WTC11 (cell line): ENCODE measurements at regions of chr1 and their contacts with region 1.

Region 1: DNA sequence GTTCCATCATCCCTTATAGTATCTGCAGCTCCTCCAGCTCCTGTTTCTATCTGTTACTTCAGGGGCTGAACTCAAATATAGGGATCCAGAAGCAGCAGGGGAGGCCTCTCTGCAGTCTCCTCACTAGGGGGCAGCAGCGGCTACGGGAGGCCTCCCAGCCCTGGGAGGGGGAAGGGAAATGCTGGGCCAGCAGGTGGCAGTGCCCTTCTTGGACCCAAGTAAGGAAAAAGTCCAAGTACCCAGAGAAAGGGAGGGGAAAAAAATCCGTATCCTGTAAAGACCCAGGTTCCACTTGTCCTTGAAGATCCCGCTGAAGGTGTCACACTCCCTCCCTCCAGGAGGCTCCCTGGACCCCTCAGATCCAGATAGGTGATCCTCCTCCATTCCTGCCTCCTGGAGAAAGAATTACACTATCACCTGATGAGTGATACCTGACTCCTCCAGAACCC is 14.1 kb upstream of the NUAK2 start:
- DNase-seq: peak; percentile 87
- ATAC-seq: peak; percentile 87
- H3K4me3 Mint-ChIP-seq: no peak overlapping the region
- H3K27ac Mint-ChIP-seq: no peak overlapping the region
- H3K4me1 Mint-ChIP-seq: peaks cover 21% of the 10 kb centered on the region
- H3K27me3 Mint-ChIP-seq: peaks cover 9% of the 10 kb centered on the region
- CTCF ChIP-seq: peak; percentile 60; the same call in 1 of the 2 replicates

Region 2: DNA sequence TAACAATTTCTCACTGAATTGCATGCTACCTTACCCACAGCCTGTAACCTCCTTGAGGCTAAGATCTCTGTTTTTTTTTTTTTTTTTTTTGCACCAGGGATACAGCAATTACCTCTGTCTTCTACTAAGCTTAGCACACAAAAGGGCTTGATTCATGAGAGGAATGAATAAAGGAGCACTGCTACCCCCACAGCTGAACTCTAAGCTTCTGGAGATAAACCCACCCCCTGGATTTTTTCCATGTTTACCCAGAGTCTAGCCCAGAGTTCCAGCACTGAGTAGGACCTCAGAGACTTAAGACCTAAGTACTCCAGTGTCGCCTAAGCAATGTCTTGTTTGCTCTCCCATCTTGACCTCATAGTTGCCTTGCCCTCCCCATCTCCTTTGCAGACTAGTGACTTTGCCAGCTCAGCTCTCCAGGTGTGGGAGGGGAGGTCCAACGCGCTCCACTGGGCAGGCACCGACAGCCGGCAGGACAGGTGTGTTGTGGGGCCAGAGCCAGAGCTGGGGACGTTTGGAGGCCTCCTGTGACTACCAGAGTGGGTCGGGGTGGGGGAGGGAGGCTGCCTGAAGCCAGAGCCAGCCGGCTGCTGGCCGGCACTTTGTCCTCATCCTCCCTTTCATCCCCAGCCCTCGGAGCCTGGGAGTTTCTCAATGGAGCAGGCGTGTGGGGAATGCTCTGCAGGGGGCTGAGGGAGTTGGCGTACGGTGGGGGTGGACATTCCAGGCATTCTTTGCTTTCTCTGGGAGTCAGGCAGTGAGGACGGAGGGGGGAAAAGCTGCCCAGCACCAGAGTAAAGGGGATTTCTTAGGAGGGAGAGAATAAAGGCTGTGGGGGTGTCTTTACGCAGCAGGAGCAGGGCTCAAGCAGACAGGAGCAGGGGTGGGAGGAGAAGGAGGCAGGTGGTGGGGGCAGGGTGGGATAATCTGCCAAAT is 34.5 kb before region 1 on chr1:
- CTCF ChIA-PET with region 1: interaction called, 10 read pairs
- POLR2A ChIA-PET with region 1: no interaction called
- DNase-seq: peak; percentile 98
- ATAC-seq: peak; percentile 83
- H3K4me3 Mint-ChIP-seq: peak overlapping the region; percentile 54
- H3K27ac Mint-ChIP-seq: peak overlapping the region; percentile 100
- H3K4me1 Mint-ChIP-seq: peaks cover 63% of the 10 kb centered on the region
- H3K27me3 Mint-ChIP-seq: no peaks in the 10 kb centered on the region
- CTCF ChIP-seq: no peak

Region 3: DNA sequence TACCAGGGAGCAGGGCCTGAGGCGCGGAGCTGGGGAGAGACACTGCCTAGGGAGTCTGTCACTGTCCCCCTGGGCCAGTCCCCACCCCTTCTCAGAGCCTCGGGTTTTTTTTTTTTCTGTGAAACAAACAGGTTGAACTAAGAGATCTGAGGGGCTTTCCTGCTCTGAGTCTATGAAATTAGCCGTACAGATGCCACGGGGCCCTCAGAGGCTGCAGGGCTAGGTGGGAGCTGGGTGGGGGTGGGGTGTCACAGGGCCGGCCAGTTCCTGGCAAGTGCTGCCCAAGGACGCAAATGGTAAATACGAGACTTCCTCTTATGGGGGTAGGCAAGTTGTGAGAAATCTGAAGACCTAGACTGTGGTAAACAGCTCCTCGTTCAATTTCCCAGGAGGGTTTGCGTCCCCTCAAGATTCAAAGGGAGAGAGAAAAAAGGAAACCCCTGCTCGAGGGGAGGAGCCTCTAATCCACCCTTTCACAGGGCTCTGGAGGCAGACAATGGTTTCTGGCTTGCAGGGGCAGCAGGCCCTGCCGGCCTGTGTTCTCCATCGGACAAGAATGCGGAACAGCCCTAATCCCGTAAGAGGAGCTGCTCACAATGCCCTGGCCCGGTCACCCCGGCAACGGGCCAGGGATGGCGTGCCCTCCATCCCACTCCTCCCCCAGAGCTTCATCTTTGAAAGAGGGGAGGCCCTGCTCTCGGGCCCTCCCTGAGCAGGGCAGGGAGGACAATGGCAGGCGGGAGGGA is 21.9 kb before region 1 on chr1:
- CTCF ChIA-PET with region 1: interaction called, 13 read pairs
- POLR2A ChIA-PET with region 1: interaction called, 7 read pairs
- DNase-seq: peak; percentile 82
- ATAC-seq: peak; percentile 94
- H3K4me3 Mint-ChIP-seq: peak overlapping the region; percentile 54
- H3K27ac Mint-ChIP-seq: peak overlapping the region; percentile 99
- H3K4me1 Mint-ChIP-seq: peaks cover 70% of the 10 kb centered on the region
- H3K27me3 Mint-ChIP-seq: no peaks in the 10 kb centered on the region; the same call in none of the 2 replicates
- CTCF ChIP-seq: no peak

Region 4: GRCh38 chr1:205321164-205321958 is 14.3 kb before region 1 on chr1 and contains the start of gene NUAK2:
- CTCF ChIA-PET with region 1: interaction called, 43 read pairs
- POLR2A ChIA-PET with region 1: no interaction called
- DNase-seq: peak; percentile 98
- ATAC-seq: peak; percentile 88
- H3K4me3 Mint-ChIP-seq: peak within 1 kb of the TSS; percentile 96
- H3K27ac Mint-ChIP-seq: peak within 1 kb of the TSS; percentile 68
- H3K4me1 Mint-ChIP-seq: peaks cover 60% of the 10 kb centered on the region
- H3K27me3 Mint-ChIP-seq: peaks cover 38% of the 10 kb centered on the region
- CTCF ChIP-seq: no peak
- total RNA-seq, gene NUAK2: 8.7 to 10.8 TPM (median 10.8 TPM) in 3 replicates

Region 5: DNA sequence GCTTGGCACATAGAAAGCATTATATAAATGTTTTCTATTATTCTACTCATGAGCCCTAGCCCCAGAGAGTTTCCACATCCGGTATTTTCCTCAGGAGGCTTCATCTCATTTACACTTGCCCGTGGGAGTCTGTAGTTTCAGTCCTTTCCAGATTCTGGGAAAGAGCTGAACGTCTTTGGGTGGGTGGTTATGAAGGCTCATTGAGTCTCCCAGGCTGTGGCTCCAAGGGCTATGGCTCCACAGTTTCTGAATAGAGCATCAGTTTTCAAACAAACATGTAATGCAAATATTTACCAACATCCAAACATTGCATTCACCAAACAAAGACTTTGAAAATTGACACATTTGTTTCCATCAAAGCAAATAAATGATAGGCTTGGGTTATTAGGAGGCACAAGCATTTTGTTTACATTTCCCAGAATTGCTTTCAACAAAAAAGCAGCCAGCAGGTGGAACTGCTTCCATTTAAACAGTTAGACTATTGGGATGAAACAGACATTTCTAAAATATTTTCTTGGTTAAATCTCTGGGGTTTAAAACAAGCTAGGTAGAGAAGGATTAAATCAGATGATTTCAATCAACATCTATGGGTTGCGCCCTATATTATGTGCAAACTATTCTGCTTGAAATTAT is 87.4 kb after region 1 on chr1:
- CTCF ChIA-PET with region 1: interaction called, 16 read pairs
- POLR2A ChIA-PET with region 1: no interaction called
- DNase-seq: no peak
- ATAC-seq: no peak
- H3K4me3 Mint-ChIP-seq: no peak overlapping the region
- H3K27ac Mint-ChIP-seq: no peak overlapping the region
- H3K4me1 Mint-ChIP-seq: peaks cover 42% of the 10 kb centered on the region
- H3K27me3 Mint-ChIP-seq: peaks cover 37% of the 10 kb centered on the region
- CTCF ChIP-seq: no peak

Region 6: GRCh38 chr1:205458777-205459566 is 123.3 kb after region 1 on chr1:
- CTCF ChIA-PET with region 1: interaction called, 11 read pairs
- POLR2A ChIA-PET with region 1: no interaction called
- DNase-seq: peak; percentile 79
- ATAC-seq: peak; percentile 16; the same call in 1 of the 2 replicates
- H3K4me3 Mint-ChIP-seq: no peak overlapping the region
- H3K27ac Mint-ChIP-seq: no peak overlapping the region
- H3K4me1 Mint-ChIP-seq: peaks cover 23% of the 10 kb centered on the region
- H3K27me3 Mint-ChIP-seq: peaks cover 4% of the 10 kb centered on the region
- CTCF ChIP-seq: no peak

Region 7: GRCh38 chr1:205658943-205659581 is 323.4 kb after region 1 on chr1:
- CTCF ChIA-PET with region 1: no interaction called
- POLR2A ChIA-PET with region 1: no interaction called
- DNase-seq: peak; percentile 91
- ATAC-seq: peak; percentile 84
- H3K4me3 Mint-ChIP-seq: no peak overlapping the region
- H3K27ac Mint-ChIP-seq: peak overlapping the region; percentile 88; the same call in 1 of the 2 replicates
- H3K4me1 Mint-ChIP-seq: peaks cover 35% of the 10 kb centered on the region
- H3K27me3 Mint-ChIP-seq: no peaks in the 10 kb centered on the region
- CTCF ChIP-seq: peak; percentile 83